Right cardiac atrium (tissue), 5 donors: ENCODE measurements at regions of chr1 and their contacts with region 1.

Region 1: DNA sequence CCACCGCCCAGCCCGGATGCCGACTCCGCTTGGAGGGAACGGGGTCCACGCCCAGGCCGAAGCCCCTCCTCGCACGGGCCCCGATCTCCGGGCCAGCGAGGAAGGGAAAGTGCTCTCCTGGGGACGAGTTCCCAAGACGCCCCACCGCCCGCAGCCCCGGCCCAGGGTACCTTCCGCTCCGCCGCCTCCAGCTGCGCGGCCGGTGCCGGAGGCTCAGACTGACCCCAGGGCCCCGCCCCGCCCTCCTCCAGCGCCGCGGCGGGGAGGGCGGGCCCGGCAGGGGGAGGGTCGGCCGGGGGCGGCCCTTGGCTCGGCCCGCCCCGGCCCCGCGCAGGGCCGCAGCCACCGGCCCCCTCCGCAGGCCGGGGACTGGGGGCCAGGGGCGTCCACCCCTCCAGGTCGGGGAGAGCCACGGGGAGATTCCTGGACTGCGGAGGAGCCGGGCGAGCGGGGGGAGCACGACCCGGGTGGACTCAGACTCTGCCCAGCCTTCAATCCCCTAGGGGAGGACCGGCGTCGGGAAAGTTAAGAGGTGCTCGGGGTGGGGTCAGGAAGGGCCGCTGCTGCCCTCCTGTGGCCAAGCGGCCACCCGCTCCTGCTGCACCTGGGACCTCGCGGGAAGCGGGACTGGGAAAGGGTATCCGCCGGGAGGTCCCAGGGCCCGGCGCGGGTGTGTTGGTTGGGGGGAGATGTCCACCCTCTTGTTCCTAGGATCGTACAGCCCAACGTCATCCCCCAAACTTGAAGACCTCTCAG is at the start of gene RHOC:
- DNase-seq: peak; percentile 90 to 95 (median 95)
- ATAC-seq: peak; percentile 76 to 87
- H3K4me3 ChIP-seq: peak within 1 kb of the TSS; percentile 94
- H3K27ac ChIP-seq: peak within 1 kb of the TSS; percentile 96
- H3K4me1 ChIP-seq: peaks cover 7% of the 10 kb centered on the region
- H3K27me3 ChIP-seq: no peaks in the 10 kb centered on the region
- total RNA-seq, gene RHOC: 169 to 222 (median 209) TPM

Region 2: DNA sequence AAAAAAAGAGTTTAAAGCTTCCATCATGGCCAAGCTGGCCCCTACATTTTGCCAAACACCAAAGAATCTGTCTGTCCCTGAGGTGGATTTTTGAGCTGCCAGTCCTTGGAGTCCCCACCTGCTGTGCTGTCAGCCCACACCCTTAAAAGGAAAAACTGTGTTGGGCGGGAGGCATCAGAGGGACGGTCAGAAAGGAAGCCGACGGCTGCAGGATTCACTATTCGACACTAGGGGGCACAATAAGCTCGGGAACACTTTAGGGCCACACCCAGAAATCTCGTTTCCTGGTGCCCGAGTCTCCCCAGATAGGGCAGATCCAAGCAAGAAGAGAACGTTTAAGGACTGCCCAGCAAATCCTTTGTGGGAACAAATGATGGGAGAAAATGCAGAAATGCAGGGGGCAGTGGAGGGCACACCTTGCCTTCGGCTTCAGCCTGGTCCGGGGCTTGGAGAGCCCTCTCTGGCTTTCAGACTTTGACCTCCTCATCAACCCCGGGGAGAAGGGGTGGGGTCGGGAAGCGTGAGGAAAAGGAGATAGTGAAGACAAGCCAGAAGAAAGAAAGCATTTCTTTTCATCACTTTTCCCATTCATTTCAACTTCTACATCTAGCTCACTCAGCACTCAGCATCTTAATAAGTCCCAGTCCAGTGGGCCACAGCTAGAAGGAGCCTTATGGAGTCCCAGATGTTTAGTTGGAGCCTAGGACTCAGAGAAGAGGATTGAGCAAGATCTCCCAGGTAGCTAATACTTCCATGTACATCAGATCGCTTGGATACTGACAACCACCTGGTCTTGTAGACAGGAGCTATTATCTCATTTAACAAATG is 316.1 kb before region 1 on chr1:
- intact Hi-C with region 1: loop called (anchors 5 to 10 kb)
- DNase-seq: peak; percentile 88 to 95 (median 91)
- ATAC-seq: peak; percentile 68 to 84
- H3K4me3 ChIP-seq: peak overlapping the region; percentile 60
- H3K27ac ChIP-seq: peak overlapping the region; percentile 93
- H3K4me1 ChIP-seq: peaks cover 6% of the 10 kb centered on the region
- H3K27me3 ChIP-seq: no peaks in the 10 kb centered on the region

Region 3: GRCh38 chr1:112501810-112502641 is 205.1 kb before region 1 on chr1:
- intact Hi-C with region 1: loop called in 3 of 4 experiments (anchors 5 to 10 kb)
- DNase-seq: peak; percentile 79 to 93 (median 93)
- ATAC-seq: peak; percentile 88 to 90
- H3K4me3 ChIP-seq: peak overlapping the region; percentile 54
- H3K27ac ChIP-seq: peak overlapping the region; percentile 21
- H3K4me1 ChIP-seq: peaks cover 3% of the 10 kb centered on the region
- H3K27me3 ChIP-seq: no peaks in the 10 kb centered on the region

Region 4: DNA sequence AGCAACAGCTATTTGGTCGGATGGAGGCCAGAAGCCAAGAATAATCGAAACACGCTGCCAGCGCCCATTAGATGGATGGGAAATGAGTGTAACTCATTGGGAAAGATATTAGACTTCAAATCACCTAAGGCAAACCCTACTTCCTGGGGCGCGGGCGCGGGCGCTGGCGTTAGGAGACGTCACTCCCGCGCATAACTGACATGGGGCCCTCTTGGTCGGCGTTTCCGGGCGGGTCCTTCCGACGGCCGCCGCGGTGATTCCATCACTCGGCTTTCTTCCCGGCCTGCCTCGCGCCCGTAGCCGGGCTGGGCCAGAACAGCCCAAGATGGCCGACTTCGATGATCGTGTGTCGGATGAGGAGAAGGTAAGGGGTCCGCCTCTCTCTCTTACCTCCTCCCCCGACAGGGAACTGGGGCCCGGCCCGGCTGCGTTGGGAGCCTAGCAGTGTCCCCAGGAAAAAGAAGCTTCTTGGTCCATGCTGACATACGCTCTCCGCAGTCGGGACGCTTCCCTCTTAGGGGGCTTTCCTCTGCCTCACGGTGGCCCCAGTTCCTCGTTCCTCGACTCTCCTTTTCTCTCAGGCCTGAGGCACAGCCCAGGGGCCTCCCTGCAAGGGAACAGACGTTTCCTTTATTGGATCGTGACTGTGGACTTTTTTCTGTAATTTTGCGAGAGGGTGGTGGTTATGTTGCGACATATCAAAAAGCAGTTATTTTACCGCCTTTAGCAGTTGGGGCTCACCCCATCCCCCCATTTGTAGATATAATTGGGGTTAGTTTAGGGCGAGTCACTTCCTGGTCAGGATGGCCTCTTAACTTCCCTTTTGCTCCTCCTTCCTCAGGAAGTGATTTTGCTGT is 87.3 kb before region 1 on chr1 and contains the start of gene CAPZA1:
- intact Hi-C with region 1: loop called (anchors 2 to 10 kb)
- DNase-seq: peak; percentile 93 to 97 (median 96)
- ATAC-seq: peak; percentile 97 to 99
- H3K4me3 ChIP-seq: peak within 1 kb of the TSS; percentile 86
- H3K27ac ChIP-seq: peak within 1 kb of the TSS; percentile 100
- H3K4me1 ChIP-seq: peaks cover 3% of the 10 kb centered on the region
- H3K27me3 ChIP-seq: no peaks in the 10 kb centered on the region
- total RNA-seq, gene CAPZA1: 30.2 to 53.4 (median 43.4) TPM

Region 5: DNA sequence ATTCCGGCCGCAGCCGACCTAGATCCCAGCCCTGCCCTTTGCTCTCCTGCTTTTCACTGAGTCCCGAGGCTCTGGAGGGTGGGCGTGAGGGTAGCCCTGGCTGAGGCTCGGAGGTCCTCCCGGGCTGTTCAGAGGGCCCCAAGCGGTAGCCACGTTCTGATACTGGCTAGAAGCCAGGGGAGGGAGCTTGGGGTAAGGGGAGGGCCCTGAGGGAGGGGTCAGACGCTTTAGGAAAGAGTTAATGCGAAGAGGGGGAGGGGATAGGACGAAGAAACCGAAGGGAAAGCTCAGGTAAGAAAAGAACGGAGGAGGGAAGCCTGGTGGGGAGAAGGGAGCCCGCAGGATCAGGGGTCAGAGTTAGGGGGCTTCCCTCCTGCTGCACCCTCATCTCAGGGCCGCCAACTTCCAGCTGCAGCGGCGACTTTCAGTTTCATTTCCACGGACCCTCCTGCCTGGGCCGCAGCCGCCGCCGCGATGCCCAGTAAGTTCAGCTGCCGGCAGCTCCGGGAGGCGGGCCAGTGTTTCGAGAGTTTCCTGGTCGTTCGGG is 32.6 kb before region 1 on chr1 and contains the start of gene MOV10:
- intact Hi-C with region 1: loop called in 1 of 4 experiments (anchors 5 kb)
- DNase-seq: peak; percentile 77 to 92 (median 90)
- ATAC-seq: peak; percentile 76 to 80
- H3K4me3 ChIP-seq: peak within 1 kb of the TSS; percentile 95
- H3K27ac ChIP-seq: peak within 1 kb of the TSS; percentile 71
- H3K4me1 ChIP-seq: no peaks in the 10 kb centered on the region
- H3K27me3 ChIP-seq: no peaks in the 10 kb centered on the region
- total RNA-seq, gene MOV10: 14.1 to 20.3 (median 18.3) TPM

Region 6: GRCh38 chr1:112769611-112770010 is 62.5 kb after region 1 on chr1:
- intact Hi-C with region 1: no loop called
- DNase-seq: no peak
- ATAC-seq: no peak
- H3K4me3 ChIP-seq: no peak overlapping the region
- H3K27ac ChIP-seq: no peak overlapping the region
- H3K4me1 ChIP-seq: no peaks in the 10 kb centered on the region
- H3K27me3 ChIP-seq: no peaks in the 10 kb centered on the region